ENCODE measurements at regions of chrX and their contacts with region 1.

Region 1: GRCh38 chrX:130028196-130028595 is 45.8 kb downstream of the BCORL1 start:
- DNase-seq: peak; percentile 87

Region 2: DNA sequence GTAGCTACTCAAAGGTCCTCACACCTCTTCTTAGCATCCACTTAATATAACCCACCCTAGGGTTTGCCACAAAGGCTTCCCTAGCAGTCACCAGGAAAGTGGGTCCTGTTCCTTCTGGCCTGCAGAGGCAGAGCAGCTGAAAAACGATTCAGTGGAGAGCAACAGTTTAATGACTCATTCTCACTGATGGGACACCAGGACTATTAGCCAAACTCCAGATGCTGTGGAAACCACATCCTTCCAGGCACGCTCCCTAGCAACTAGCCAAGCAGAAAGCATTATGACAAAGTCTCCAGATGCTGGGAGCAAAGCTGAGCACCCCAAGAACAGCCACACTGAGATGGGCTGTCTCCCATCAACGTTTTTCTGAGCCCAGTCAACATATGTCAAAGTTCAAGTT is 152.5 kb before region 1 on chrX:
- intact Hi-C with region 1: no loop called
- DNase-seq: no peak

Region 3: DNA sequence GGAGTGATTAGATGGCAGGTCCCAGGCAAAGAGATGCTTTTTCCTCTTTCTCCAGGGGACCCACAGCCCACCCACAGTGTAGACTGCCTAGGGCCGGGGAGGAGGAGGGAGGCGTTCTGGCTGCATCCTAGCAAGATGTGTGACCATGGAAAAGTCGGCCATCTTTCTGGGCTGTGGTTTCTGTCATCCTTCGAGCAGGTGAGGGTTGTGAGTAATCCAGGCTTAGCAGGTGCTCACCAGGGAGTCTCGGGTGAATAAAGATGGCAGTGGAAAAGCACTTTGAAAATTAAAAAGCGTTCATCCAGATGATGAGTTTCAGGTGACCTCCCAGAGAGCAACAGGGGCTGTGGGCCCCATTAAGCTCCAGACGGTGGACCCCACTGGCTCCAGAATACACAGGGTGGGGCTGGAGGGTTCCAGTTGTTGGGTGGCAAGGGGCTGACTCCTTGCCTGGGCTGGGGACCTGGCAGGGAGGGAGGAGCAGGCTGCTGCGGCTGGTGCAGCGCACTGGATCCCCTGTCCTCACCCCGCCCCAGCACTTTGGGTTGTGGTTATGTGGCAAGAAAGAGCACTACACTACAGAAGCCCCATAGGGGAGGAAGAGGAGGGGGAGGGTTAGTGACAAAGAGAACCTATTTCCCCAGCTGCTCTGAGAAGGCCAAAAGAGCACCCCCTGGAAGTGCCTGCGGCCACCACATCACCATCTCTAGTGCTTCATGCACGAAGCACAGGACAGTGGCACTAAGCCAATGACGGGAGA is 58.4 kb after region 1 on chrX:
- intact Hi-C with region 1: no loop called
- DNase-seq: no peak

Region 4: GRCh38 chrX:130100180-130100579 is 72.0 kb after region 1 on chrX:
- intact Hi-C with region 1: loop called in 1 of 2 experiments (anchors 2 kb)
- DNase-seq: peak; percentile 91